Caco-2 (cell line): ENCODE measurements at regions of chr16 and their contacts with region 1.

Region 1: DNA sequence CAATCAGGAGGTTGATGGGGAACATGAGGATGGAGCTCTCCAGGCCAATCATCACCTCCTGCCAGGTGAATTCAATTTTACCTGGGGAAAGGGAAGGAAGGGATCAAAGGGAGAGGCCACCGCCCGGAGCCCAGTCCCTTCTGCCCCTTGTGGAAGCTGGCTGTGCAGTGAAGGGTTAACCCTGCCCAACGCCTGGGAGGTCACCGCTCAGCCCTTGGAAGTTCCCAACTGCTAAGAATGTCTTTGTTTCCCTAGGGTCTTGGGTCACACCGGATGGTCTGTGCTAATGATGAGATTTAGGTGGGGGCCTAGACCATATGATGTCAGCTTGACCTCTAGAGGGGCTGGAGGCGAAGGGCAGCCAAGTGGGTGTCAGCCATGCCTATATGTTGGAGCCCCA is 52.1 kb upstream of the GCSH start:
- DNase-seq: no peak
- H3K4me3 ChIP-seq: no peak overlapping the region
- H3K4me3 Mint-ChIP-seq: no peak overlapping the region
- H3K27ac Mint-ChIP-seq: no peak overlapping the region
- H3K4me1 ChIP-seq: peaks cover 18% of the 10 kb centered on the region
- H3K4me1 Mint-ChIP-seq: peaks cover 8% of the 10 kb centered on the region
- H3K27me3 ChIP-seq: no peaks in the 10 kb centered on the region; the same call in 1 of the 2 replicates
- H3K27me3 Mint-ChIP-seq: no peaks in the 10 kb centered on the region
- CTCF ChIP-seq: no peak

Region 2: GRCh38 chr16:81088836-81089235 is 59.4 kb before region 1 on chr16:
- CTCF ChIA-PET with region 1: no interaction called
- POLR2A ChIA-PET with region 1: no interaction called
- intact Hi-C with region 1: no loop called
- DNase-seq: no peak
- H3K4me3 ChIP-seq: no peak overlapping the region
- H3K4me3 Mint-ChIP-seq: no peak overlapping the region
- H3K27ac Mint-ChIP-seq: no peak overlapping the region
- H3K4me1 ChIP-seq: no peaks in the 10 kb centered on the region
- H3K4me1 Mint-ChIP-seq: no peaks in the 10 kb centered on the region
- H3K27me3 ChIP-seq: no peaks in the 10 kb centered on the region
- H3K27me3 Mint-ChIP-seq: no peaks in the 10 kb centered on the region
- CTCF ChIP-seq: no peak

Region 3: DNA sequence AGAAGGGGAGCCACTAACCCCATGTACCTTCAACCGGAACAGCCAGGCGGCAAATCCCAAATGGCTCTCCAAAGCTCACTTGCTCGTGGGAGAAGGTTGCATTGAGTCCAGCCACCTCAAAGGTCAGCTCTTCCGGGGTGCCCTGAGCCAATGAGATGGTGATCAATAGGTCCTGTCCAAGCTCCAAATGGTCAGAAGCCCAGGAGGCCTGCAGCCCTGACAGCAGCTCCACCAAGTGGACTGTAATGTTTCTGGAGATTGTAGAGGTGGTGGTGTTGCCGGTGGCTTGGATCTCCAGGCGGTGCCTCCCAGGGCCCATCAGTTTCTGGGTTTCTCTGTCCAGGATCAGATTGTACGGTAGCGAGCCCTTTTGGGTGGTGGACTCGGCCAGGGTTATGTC is 50.4 kb after region 1 on chr16:
- CTCF ChIA-PET with region 1: interaction called, 9 read pairs
- POLR2A ChIA-PET with region 1: no interaction called
- intact Hi-C with region 1: loop called (anchors 5 kb)
- DNase-seq: peak; percentile 39 to 47
- H3K4me3 ChIP-seq: no peak overlapping the region
- H3K4me3 Mint-ChIP-seq: no peak overlapping the region
- H3K27ac Mint-ChIP-seq: no peak overlapping the region
- H3K4me1 ChIP-seq: no peaks in the 10 kb centered on the region
- H3K4me1 Mint-ChIP-seq: no peaks in the 10 kb centered on the region
- H3K27me3 ChIP-seq: no peaks in the 10 kb centered on the region
- H3K27me3 Mint-ChIP-seq: peaks cover 3% of the 10 kb centered on the region
- CTCF ChIP-seq: peak in 1 of 2 experiments; percentile 34